HCT116 (cell line): ENCODE measurements at regions of chr11 and their contacts with region 1.

Region 1: GRCh38 chr11:62427630-62428233 is 8.9 kb downstream of the SCGB1A1 start:
- DNase-seq: no peak
- ATAC-seq: no peak
- H3K4me3 ChIP-seq: no peak overlapping the region
- H3K27ac ChIP-seq: no peak overlapping the region
- H3K4me1 ChIP-seq: peaks cover 0 to 29% of the 10 kb centered on the region in 2 experiments; a peak in 2 of 4 replicates
- H3K27me3 ChIP-seq: no peaks in the 10 kb centered on the region
- CTCF ChIP-seq: no peak
- POLR2A ChIP-seq: no peak
- RAD21 ChIP-seq: no peak

Region 2: GRCh38 chr11:62150907-62151736 is 276.6 kb before region 1 on chr11:
- CTCF ChIA-PET with region 1: no interaction called
- POLR2A ChIA-PET with region 1: no interaction called
- RAD21 ChIA-PET with region 1: no interaction called
- intact Hi-C with region 1: no loop called
- DNase-seq: no peak
- ATAC-seq: no peak
- H3K4me3 ChIP-seq: no peak overlapping the region
- H3K27ac ChIP-seq: no peak overlapping the region
- H3K4me1 ChIP-seq: no peaks in the 10 kb centered on the region
- H3K27me3 ChIP-seq: no peaks in the 10 kb centered on the region
- CTCF ChIP-seq: no peak
- POLR2A ChIP-seq: no peak
- RAD21 ChIP-seq: no peak

Region 3: DNA sequence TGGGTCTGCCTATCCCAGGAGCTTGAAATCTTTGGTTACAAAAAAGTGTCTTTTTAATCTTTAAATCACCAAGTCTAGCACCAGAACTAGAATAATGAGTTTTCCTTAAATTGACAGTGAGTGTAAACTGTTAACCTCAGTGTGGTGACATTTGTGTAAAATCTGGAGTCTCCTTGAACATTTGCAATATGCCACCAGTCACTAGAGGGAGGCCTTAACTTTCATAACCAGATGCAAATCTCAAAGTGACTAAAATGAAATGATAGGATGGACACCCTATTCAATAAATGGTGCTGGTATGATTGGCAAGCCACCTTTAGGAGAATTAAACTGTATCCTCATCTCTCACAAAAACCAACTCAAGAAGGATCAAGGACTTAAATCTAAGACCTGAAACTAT is 194.0 kb before region 1 on chr11:
- CTCF ChIA-PET with region 1: no interaction called
- POLR2A ChIA-PET with region 1: no interaction called
- RAD21 ChIA-PET with region 1: no interaction called
- intact Hi-C with region 1: no loop called
- DNase-seq: no peak
- ATAC-seq: no peak; the same call in 1 of the 2 replicates
- H3K4me3 ChIP-seq: no peak overlapping the region
- H3K27ac ChIP-seq: no peak overlapping the region
- H3K4me1 ChIP-seq: no peaks in the 10 kb centered on the region
- H3K27me3 ChIP-seq: peaks cover 34% of the 10 kb centered on the region; the same call in 1 of the 2 replicates
- CTCF ChIP-seq: peak; percentile 12 to 48 (median 31); a peak in 3 of 6 replicates
- POLR2A ChIP-seq: no peak
- RAD21 ChIP-seq: peak; percentile 49

Region 4: GRCh38 chr11:62394825-62395538 is 32.8 kb before region 1 on chr11:
- CTCF ChIA-PET with region 1: interaction called, 18 read pairs
- POLR2A ChIA-PET with region 1: no interaction called
- RAD21 ChIA-PET with region 1: no interaction called
- intact Hi-C with region 1: no loop called
- DNase-seq: peak; percentile 61
- ATAC-seq: peak; percentile 82
- H3K4me3 ChIP-seq: no peak overlapping the region; a peak in 1 of 4 replicates
- H3K27ac ChIP-seq: no peak overlapping the region
- H3K4me1 ChIP-seq: peaks cover 9 to 21% of the 10 kb centered on the region in 2 experiments; a peak in 3 of 4 replicates
- H3K27me3 ChIP-seq: no peaks in the 10 kb centered on the region
- CTCF ChIP-seq: peak; percentile 58 to 85 (median 81)
- POLR2A ChIP-seq: no peak
- RAD21 ChIP-seq: peak; percentile 95

Region 5: DNA sequence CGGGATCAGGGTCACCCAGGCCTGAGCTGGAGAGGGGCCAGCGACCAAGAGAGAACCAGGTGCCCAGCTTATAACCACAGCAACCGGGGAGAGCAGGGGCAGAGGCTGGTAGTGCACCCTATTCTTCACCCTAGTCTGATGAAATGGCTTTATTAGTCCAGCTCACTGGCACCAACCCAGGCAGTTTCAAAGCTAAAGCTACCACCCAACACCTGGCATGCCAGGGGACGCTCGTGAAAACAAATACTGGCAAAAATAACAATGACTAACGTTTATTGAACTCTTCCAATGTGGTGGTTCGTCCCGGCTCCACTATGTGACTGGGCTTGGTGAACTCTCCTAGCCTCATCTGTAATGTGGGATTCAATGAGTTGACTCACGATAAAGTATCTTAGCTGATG is 21.7 kb after region 1 on chr11:
- CTCF ChIA-PET with region 1: interaction called, 11 read pairs
- POLR2A ChIA-PET with region 1: no interaction called
- RAD21 ChIA-PET with region 1: no interaction called
- intact Hi-C with region 1: no loop called
- DNase-seq: no peak
- ATAC-seq: peak; percentile 75
- H3K4me3 ChIP-seq: no peak overlapping the region
- H3K27ac ChIP-seq: no peak overlapping the region
- H3K4me1 ChIP-seq: peaks cover 5 to 8% of the 10 kb centered on the region in 2 experiments; a peak in 3 of 4 replicates
- H3K27me3 ChIP-seq: peaks cover 5% of the 10 kb centered on the region; the same call in 1 of the 2 replicates
- CTCF ChIP-seq: no peak
- POLR2A ChIP-seq: no peak
- RAD21 ChIP-seq: no peak

Region 6: DNA sequence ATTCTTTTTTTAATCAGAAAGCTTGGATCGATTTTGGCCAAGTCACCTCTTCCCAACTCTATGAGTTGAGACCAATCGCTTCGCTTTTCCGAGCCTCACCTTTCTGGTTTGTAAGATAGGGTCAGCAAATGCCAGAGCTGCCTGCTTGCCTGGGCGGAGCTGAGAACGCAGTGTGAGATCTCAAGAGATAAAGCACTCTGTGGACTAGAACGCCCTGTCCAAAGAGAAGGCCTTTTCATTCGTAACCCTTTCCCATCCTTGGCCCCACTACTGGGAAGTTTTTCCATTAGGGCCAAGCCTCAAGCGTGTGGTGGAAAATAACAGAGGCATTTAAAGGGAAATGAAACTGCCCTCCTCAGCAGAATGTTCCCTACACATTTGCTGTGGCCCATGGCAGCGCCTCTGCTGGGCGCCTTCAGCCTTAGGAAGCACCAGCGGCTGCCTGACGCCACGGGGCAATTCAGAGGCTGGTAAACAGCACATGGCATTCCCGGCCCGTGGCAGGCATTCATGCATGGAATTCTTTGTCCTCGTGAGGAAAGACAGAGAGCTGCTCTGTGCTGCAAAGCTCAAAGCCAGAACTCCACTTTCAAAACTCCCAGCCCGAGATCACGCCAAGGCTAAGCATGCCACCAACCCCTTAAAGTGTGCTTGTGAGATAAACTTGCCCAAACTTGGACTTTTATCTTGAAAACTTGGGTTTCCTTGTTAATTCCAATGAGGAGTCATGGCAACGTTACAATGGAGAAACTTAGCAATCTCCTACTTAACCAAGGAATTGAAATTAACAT is 80.7 kb after region 1 on chr11:
- CTCF ChIA-PET with region 1: interaction called, 11 read pairs
- POLR2A ChIA-PET with region 1: no interaction called
- RAD21 ChIA-PET with region 1: no interaction called
- intact Hi-C with region 1: no loop called
- DNase-seq: peak; percentile 39
- ATAC-seq: peak; percentile 95
- H3K4me3 ChIP-seq: peak overlapping the region; percentile 28 to 43
- H3K27ac ChIP-seq: peak overlapping the region; percentile 37
- H3K4me1 ChIP-seq: peaks cover 11 to 28% of the 10 kb centered on the region in 2 experiments
- H3K27me3 ChIP-seq: no peaks in the 10 kb centered on the region
- CTCF ChIP-seq: peak in 2 of 3 experiments; percentile 60 to 77; a peak in 5 of 6 replicates
- POLR2A ChIP-seq: no peak
- RAD21 ChIP-seq: no peak

Region 7: DNA sequence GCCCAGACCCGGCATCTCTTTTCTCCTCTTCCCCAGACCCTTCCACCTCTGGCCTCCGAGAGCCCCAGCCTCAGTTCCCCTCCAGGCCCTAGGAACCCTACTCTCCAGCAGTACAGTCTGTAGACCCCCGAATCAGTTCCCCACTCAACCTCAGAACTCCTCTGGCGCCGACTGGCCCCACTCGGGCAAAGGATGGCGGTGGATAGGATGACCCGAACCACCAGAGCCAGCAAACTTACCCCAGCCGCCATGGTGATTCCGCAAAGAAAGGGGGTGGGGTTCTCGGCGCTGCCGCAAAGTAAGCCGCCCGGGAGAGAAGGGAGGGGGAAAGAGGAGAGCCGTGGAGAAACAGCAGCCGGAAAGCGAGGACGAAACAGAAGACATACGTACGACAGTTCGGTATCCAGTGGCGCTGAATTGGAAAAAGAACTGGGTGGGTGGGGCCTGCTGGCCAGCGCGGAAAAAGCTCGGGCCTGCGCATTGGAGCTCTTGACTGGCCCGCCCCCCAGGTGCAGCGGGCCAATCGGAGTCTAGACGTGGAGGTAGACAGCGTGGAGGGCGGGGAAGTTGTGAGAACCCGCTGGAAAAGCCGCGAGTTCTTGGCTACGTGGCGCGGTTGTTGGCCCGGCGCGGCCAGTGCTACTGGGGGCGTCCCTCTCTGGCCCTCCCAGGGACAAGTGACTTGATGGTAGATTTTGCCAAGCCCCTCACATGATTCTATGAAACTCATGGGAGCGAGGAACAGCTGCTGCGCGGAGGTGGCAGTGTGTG is 146.0 kb after region 1 on chr11 and contains the start of gene EEF1G:
- CTCF ChIA-PET with region 1: interaction called, 18 read pairs
- POLR2A ChIA-PET with region 1: interaction called, 12 read pairs
- RAD21 ChIA-PET with region 1: interaction called in 1 of 2 experiments, 3 read pairs
- intact Hi-C with region 1: no loop called
- DNase-seq: peak; percentile 99
- ATAC-seq: peak; percentile 95
- H3K4me3 ChIP-seq: peak within 1 kb of the TSS; percentile 76 to 99
- H3K27ac ChIP-seq: peak within 1 kb of the TSS; percentile 94
- H3K4me1 ChIP-seq: peaks cover 8 to 30% of the 10 kb centered on the region in 2 experiments
- H3K27me3 ChIP-seq: no peaks in the 10 kb centered on the region
- CTCF ChIP-seq: no peak
- POLR2A ChIP-seq: peak; percentile 79
- RAD21 ChIP-seq: no peak
- total RNA-seq, gene EEF1G: 1,901 TPM

Region 8: DNA sequence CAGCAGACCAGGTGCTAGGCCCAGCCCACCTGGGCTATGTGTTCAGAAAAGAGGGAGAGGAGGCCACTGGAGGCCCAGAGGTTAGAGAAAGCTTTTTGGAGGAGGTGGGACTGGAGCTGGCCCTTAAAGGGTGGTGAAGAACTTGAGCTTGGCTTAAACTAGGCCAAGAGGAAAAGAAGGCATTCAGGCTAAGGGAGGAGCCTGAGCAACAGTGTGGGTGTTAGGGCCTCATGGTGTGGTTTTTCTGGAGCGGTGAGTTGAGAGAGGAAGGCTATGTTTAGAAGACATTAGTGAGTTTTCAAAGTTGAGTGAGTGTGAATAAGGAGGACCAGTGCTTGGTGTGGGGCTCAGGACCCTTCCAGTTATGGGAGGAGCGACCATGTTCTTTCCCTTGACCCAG is 349.7 kb after region 1 on chr11:
- CTCF ChIA-PET with region 1: no interaction called
- POLR2A ChIA-PET with region 1: no interaction called
- RAD21 ChIA-PET with region 1: no interaction called
- intact Hi-C with region 1: no loop called
- DNase-seq: no peak
- ATAC-seq: no peak
- H3K4me3 ChIP-seq: no peak overlapping the region
- H3K27ac ChIP-seq: no peak overlapping the region
- H3K4me1 ChIP-seq: no peaks in the 10 kb centered on the region; a peak in 1 of 4 replicates
- H3K27me3 ChIP-seq: no peaks in the 10 kb centered on the region
- CTCF ChIP-seq: no peak
- POLR2A ChIP-seq: no peak
- RAD21 ChIP-seq: no peak